HEK293 (cell line): ENCODE measurements at regions of chr3 and their contacts with region 1.

Region 1: DNA sequence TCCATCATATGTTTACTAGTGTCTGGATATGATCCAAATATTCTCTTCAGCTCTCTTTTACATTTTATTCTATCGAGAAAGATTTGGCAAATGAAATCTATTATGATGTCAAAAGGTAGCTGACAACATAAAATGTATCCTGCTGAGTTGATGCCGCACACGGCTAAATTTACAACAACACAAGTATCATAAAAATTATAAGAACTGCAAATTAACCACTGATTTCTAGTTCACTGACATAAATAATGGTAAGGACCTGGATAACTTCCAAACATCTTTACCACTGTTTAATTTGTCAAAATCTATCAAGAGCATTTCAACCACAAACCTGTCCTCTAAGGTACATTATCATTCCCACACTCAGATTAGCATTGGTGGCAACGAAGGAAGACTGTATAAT is 244.5 kb downstream of the FOXP1 start:
- H3K4me3 ChIP-seq: no peak overlapping the region
- H3K27ac ChIP-seq: no peak overlapping the region
- H3K4me1 ChIP-seq: peaks cover 6% of the 10 kb centered on the region
- CTCF ChIP-seq: no peak

Region 2: GRCh38 chr3:71300951-71301393 is 38.1 kb before region 1 on chr3:
- CTCF ChIA-PET with region 1: no interaction called
- POLR2A ChIA-PET with region 1: no interaction called
- H3K4me3 ChIP-seq: no peak overlapping the region
- H3K27ac ChIP-seq: no peak overlapping the region
- H3K4me1 ChIP-seq: peaks cover 16% of the 10 kb centered on the region
- CTCF ChIP-seq: no peak

Region 3: GRCh38 chr3:71322154-71322553 is 16.9 kb before region 1 on chr3:
- CTCF ChIA-PET with region 1: no interaction called
- POLR2A ChIA-PET with region 1: interaction called, 10 read pairs
- H3K4me3 ChIP-seq: no peak overlapping the region
- H3K27ac ChIP-seq: no peak overlapping the region
- H3K4me1 ChIP-seq: peaks cover 8% of the 10 kb centered on the region; the same call in 1 of the 2 replicates
- CTCF ChIP-seq: no peak

Region 4: DNA sequence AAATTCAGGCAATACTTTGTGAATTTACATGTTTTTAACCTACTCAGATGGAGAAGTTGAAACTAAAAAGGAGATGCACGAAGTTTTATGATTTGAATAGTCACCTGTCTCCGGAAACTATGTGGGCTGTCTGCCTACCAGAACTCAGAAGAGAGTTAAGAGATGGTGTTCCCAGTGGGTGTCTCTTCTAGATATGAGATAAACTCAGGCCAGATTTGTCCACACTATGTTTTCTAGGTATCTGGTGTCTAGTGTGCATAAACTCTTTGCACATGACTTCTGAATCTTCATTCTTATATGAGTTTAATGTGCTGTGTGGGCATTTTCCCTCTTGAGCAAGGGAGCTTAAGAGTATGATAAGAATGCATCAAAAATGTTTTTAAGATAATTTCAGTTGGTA is 21.7 kb after region 1 on chr3:
- CTCF ChIA-PET with region 1: no interaction called
- POLR2A ChIA-PET with region 1: no interaction called
- H3K4me3 ChIP-seq: no peak overlapping the region
- H3K27ac ChIP-seq: no peak overlapping the region
- H3K4me1 ChIP-seq: no peaks in the 10 kb centered on the region
- CTCF ChIP-seq: no peak